ENCODE measurements at regions of chr16 and their contacts with region 1.

Region 1: GRCh38 chr16:2474877-2475412 is at the start of gene TBC1D24:
- DNase-seq: peak; percentile 79
- H3K4me3 Mint-ChIP-seq: peak within 1 kb of the TSS; percentile 74
- H3K27ac Mint-ChIP-seq: peak within 1 kb of the TSS; percentile 34
- H3K4me1 Mint-ChIP-seq: peaks cover 4% of the 10 kb centered on the region
- H3K27me3 Mint-ChIP-seq: peaks cover 20% of the 10 kb centered on the region
- total RNA-seq, gene TBC1D24: 19.6 and 24.6 TPM in 2 replicates

Region 2: GRCh38 chr16:2317231-2318020 is 157.5 kb before region 1 on chr16:
- intact Hi-C with region 1: no loop called
- DNase-seq: no peak
- H3K4me3 Mint-ChIP-seq: no peak overlapping the region
- H3K27ac Mint-ChIP-seq: no peak overlapping the region
- H3K4me1 Mint-ChIP-seq: no peaks in the 10 kb centered on the region
- H3K27me3 Mint-ChIP-seq: no peaks in the 10 kb centered on the region

Region 3: DNA sequence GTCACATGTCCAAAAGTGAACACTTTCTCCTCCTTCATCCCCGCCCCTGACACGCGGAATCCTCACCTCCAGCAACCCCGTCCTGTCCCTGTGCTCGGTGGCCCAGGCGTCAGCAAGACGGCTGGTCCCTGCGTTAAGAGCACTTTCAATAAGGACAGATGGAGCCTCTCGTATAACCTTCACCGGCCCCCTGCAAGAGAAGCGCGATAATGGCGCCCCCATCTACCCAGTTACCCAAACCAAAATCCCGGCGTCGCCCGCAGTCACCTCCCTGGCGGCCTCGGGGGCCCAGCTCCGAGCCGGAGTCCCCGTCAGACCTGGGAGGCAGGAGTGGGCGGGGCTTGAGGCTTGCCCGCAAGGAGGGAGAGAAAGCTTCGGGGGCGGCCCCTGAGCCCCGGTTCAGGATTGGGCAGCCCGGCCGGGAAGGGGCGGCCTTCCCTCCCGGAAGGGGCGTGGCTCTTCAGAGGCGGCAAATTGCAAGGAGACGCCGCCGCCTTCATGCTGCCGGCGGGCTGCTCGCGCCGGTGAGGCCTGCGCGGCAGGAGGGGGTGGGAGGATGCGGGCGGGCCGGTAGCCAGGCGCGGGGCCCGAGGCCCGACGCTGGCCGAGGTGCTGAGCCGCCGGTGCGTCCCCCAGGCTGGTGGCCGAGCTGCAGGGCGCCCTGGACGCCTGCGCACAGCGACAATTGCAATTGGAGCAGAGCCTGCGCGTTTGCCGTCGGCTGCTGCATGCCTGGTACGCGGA is 15.1 kb before region 1 on chr16 and contains the start of gene TEDC2:
- intact Hi-C with region 1: loop called (anchors 1 kb)
- DNase-seq: peak; percentile 96
- H3K4me3 Mint-ChIP-seq: peak within 1 kb of the TSS; percentile 86
- H3K27ac Mint-ChIP-seq: peak within 1 kb of the TSS; percentile 80
- H3K4me1 Mint-ChIP-seq: peaks cover 7% of the 10 kb centered on the region
- H3K27me3 Mint-ChIP-seq: no peaks in the 10 kb centered on the region
- total RNA-seq, gene TEDC2: 41.0 and 43.9 TPM in 2 replicates

Region 4: DNA sequence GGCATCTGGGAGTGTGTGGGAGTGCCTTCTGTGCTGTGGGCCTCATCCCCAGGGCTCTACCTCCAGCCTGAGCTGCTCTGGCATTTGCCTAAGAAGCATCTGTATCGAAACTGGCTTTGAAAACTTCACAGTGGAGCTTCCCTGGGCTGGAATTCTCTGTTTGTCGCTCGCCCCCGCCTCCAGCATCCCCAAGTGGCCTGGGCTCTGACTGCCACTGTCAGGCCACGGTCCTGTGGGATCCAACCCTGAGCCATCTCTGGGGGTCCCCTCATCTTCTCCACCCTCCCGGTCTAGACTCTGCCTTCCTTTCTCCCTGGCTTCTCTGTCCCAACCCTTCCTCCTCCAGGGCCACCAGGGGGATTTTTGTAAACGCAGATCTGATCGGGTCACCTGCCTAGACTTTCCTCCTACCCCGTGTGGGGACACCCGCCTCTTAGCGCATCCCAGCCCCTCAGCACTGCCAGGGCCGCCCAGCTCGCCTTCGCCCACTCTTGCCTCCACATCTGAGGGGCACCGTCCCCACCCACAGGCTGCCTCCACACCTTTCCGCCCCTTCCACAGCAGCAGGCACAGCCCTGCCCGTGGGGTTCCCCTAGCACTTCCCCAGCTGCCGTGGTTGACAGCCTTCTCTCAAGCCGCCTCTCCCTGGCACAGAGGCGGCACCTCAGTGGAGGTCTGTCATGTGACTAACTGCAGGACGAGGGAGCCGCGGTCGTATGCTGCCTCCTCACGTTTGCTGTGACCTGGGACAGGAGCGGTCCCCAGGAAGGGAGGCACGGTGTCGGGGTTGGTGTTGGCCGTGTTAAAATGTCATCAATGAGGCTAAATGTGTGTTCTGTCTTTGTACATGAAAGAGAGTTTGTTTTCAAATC is 11.9 kb after region 1 on chr16:
- intact Hi-C with region 1: loop called (anchors 1 kb)
- DNase-seq: peak; percentile 65
- H3K4me3 Mint-ChIP-seq: peak overlapping the region; percentile 9
- H3K27ac Mint-ChIP-seq: peak overlapping the region; percentile 65
- H3K4me1 Mint-ChIP-seq: peaks cover 14% of the 10 kb centered on the region
- H3K27me3 Mint-ChIP-seq: no peaks in the 10 kb centered on the region

Region 5: GRCh38 chr16:2513405-2514322 is 38.7 kb after region 1 on chr16 and contains the start of gene ATP6V0C:
- intact Hi-C with region 1: loop called (anchors 2 kb)
- DNase-seq: peak; percentile 88
- H3K4me3 Mint-ChIP-seq: peak within 1 kb of the TSS; percentile 91
- H3K27ac Mint-ChIP-seq: peak within 1 kb of the TSS; percentile 93
- H3K4me1 Mint-ChIP-seq: peaks cover 38% of the 10 kb centered on the region
- H3K27me3 Mint-ChIP-seq: peaks cover 6% of the 10 kb centered on the region
- total RNA-seq, gene ATP6V0C: 117 and 119 TPM in 2 replicates

Region 6: GRCh38 chr16:2531767-2532493 is 57.0 kb after region 1 on chr16:
- intact Hi-C with region 1: loop called (anchors 2 kb)
- DNase-seq: peak; percentile 97
- H3K4me3 Mint-ChIP-seq: peak overlapping the region; percentile 100
- H3K27ac Mint-ChIP-seq: peak overlapping the region; percentile 100
- H3K4me1 Mint-ChIP-seq: peaks cover 9% of the 10 kb centered on the region
- H3K27me3 Mint-ChIP-seq: no peaks in the 10 kb centered on the region